Activated CD8-positive, alpha-beta T cell treated with anti-CD3 and anti-CD28 coated beads for 36 hours (primary cell): ENCODE measurements at regions of chr3 and their contacts with region 1.

Region 1: DNA sequence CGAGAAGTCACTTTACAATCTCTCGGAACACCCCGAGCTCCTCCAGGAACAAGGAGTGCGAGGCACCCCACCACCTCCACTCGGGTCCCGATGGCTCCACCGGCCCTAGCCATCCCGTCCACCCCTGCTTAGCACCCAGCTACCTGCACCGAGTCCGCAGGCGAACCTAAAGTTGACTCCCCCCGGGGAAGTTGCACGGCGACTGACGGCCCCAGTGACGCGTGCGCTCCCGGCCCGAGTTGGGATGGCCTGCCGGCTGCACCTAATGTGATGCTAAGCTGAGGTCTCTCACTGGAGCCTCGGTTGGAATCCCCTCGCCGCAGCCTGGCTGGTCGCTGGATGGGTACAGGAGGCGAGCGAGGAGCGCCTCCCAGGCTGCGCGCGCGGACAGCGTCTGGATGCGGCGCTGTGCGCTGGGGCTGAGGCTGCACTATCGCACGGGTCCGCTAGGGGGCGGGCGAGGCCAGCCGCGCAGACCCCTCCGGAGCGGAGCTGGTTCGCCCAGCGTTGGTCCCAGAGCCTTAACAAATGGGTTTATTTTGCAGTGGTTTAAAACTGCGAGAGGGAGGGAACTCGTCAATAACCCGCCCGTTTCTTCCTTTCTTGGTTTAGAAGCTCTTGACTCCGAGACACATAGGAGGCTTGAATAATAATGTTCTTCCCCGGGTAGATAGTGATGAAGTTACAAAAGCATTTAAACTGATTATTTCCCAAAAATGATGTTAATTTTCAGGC is at the start of gene OXTR:
- DNase-seq: peak; percentile 66
- ATAC-seq: peak; percentile 97
- H3K4me3 Mint-ChIP-seq: peak within 1 kb of the TSS; percentile 41
- H3K27ac Mint-ChIP-seq: no peak within 1 kb of the TSS
- H3K4me1 Mint-ChIP-seq: peaks cover 15% of the 10 kb centered on the region
- H3K27me3 Mint-ChIP-seq: peaks cover 48% of the 10 kb centered on the region
- CTCF ChIP-seq: peak; percentile 100
- total RNA-seq, gene OXTR: 1.1 to 2.0 TPM

Region 2: DNA sequence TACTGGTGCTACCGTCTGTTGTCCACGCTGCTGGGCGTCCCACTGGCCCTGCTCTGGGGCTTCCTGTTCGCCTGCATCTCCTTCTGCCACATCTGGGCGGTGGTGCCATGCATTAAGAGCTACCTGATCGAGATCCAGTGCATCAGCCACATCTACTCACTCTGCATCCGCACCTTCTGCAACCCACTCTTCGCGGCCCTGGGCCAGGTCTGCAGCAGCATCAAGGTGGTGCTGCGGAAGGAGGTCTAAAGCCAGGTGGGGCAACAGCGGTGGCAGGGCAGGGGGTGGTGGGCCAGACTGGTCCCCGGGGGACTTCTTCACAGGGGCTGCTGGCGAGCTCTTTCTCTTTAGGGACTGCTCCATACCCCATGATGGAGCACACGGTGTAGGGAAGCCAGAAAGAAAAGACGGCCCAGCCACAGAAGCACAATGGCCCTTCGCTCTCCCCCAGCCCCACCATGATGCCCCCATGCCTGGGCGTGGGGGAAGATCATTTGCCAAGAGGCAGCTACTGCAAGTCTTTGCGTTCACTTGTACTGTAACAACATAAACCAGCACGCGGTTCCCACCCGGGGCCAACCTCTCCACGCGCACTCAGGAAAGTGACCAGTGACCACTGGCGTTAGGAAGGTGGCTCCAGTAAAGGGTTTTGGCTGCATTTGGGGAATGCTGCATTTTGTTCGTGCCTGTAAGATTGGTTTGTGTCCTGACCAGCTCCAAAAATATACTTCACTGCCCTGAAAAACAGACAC is 23.5 kb before region 1 on chr3:
- CTCF ChIA-PET with region 1: interaction called, 10 read pairs
- POLR2A ChIA-PET with region 1: no interaction called
- intact Hi-C with region 1: no loop called
- DNase-seq: no peak
- ATAC-seq: no peak
- H3K4me3 Mint-ChIP-seq: no peak overlapping the region
- H3K27ac Mint-ChIP-seq: no peak overlapping the region
- H3K4me1 Mint-ChIP-seq: no peaks in the 10 kb centered on the region
- H3K27me3 Mint-ChIP-seq: peaks cover 5% of the 10 kb centered on the region
- CTCF ChIP-seq: no peak

Region 3: GRCh38 chr3:8757551-8758518 is 11.4 kb before region 1 on chr3:
- CTCF ChIA-PET with region 1: interaction called, 16 read pairs
- POLR2A ChIA-PET with region 1: no interaction called
- intact Hi-C with region 1: no loop called
- DNase-seq: no peak
- ATAC-seq: no peak
- H3K4me3 Mint-ChIP-seq: no peak overlapping the region
- H3K27ac Mint-ChIP-seq: no peak overlapping the region
- H3K4me1 Mint-ChIP-seq: no peaks in the 10 kb centered on the region
- H3K27me3 Mint-ChIP-seq: peaks cover 2% of the 10 kb centered on the region
- CTCF ChIP-seq: no peak

Region 4: GRCh38 chr3:8784676-8785435 is 15.6 kb after region 1 on chr3:
- CTCF ChIA-PET with region 1: interaction called, 11 read pairs
- POLR2A ChIA-PET with region 1: no interaction called
- intact Hi-C with region 1: no loop called
- DNase-seq: no peak
- ATAC-seq: no peak
- H3K4me3 Mint-ChIP-seq: no peak overlapping the region
- H3K27ac Mint-ChIP-seq: no peak overlapping the region
- H3K4me1 Mint-ChIP-seq: no peaks in the 10 kb centered on the region
- H3K27me3 Mint-ChIP-seq: no peaks in the 10 kb centered on the region
- CTCF ChIP-seq: no peak